ENCODE measurements at regions of chr2 and their contacts with region 1.

Region 1: DNA sequence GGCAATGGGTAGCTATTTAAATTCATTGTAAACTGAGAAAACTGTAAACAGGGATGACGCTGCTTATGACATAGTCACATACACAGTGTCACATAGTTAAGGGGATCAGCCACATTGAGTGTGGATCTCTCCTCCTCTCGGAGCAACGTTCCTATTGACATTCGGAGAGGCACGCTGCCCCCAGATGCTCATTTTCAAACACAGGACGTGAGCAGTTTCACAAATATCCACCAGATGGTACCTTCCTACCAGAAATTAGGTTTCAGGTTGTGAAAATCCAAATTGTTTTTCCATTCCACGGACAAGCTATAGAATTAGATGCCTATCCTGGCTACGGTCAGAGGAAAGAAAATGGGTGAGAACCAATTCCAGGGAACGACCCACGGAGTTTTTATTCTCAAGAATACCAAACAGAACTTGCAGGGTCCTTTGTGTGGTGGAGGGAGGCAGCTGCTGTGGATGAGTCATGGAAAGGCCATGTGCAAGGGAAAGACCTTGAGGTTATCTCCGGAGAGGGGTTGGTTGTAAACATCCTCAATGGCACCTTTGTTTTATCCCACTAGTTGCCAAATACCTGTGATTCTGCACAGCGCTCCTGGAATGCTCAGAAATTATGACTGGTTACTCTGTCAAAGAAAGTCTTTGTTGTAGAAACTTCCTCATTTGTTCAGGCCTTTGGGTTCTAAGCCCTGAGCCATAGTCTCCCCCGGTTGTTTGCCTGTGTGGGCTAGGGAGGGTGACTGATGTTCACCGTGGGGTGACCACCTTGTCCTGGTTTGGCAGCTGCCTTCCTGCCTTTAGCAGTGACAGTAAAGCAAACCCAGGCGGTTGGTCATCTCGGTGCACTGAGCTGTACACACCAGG is 88.0 kb downstream of the ACTR3 start:
- DNase-seq: peak; percentile 12
- ATAC-seq: no peak
- H3K4me3 Mint-ChIP-seq: no peak overlapping the region
- H3K27ac Mint-ChIP-seq: no peak overlapping the region
- H3K4me1 Mint-ChIP-seq: peaks cover 5% of the 10 kb centered on the region
- H3K27me3 Mint-ChIP-seq: no peaks in the 10 kb centered on the region

Region 2: GRCh38 chr2:113602869-113603466 is 374.9 kb before region 1 on chr2:
- CTCF ChIA-PET with region 1: interaction called, 4 read pairs
- POLR2A ChIA-PET with region 1: no interaction called
- intact Hi-C with region 1: loop called in 1 of 2 experiments (anchors 2 kb)
- DNase-seq: peak; percentile 6
- ATAC-seq: peak; percentile 47
- H3K4me3 Mint-ChIP-seq: peak overlapping the region; percentile 82
- H3K27ac Mint-ChIP-seq: peak overlapping the region; percentile 90
- H3K4me1 Mint-ChIP-seq: peaks cover 7% of the 10 kb centered on the region
- H3K27me3 Mint-ChIP-seq: no peaks in the 10 kb centered on the region

Region 3: DNA sequence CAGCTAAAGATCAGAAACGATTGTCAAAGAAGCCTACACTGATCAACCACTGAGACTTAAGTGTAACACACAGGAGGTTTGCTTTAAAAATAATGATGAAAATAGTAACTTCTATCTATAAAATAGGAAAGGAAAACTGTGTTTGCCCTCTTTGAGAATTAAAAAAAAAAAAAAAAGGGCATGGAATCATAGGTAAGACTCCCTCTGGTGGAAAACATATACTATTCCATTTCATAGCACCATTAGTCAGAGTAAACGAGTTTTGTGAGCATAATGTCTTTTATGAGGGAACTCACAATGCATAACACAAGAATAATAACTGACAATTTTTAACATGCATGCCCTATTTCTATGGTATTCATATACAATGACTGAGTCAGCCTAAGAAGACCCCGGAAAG is 257.7 kb before region 1 on chr2:
- CTCF ChIA-PET with region 1: interaction called, 8 read pairs
- POLR2A ChIA-PET with region 1: no interaction called
- intact Hi-C with region 1: loop called in 1 of 2 experiments (anchors 5 kb)
- DNase-seq: no peak
- ATAC-seq: no peak
- H3K4me3 Mint-ChIP-seq: no peak overlapping the region
- H3K27ac Mint-ChIP-seq: no peak overlapping the region
- H3K4me1 Mint-ChIP-seq: no peaks in the 10 kb centered on the region
- H3K27me3 Mint-ChIP-seq: no peaks in the 10 kb centered on the region

Region 4: DNA sequence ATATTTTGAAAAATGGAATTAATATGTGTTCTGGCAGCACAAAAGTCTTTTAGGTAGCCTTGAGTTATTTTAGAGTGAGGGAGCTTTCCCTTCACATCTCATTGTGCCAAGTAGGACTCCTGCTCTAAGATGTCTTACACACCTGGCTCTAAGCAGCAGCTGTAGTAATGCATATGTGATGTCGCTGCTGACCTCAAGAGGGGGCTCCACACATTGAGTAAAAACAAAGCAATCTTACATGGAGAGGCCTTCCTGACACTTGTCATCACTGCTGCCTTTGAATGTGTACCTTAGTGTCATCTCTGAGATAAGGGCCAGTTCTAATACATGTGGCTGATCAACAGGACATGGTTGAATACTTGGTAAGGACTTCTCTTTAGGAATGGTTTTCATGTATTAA is 12.2 kb before region 1 on chr2:
- CTCF ChIA-PET with region 1: interaction called, 27 read pairs
- POLR2A ChIA-PET with region 1: no interaction called
- intact Hi-C with region 1: no loop called
- DNase-seq: peak; percentile 53
- ATAC-seq: peak; percentile 83
- H3K4me3 Mint-ChIP-seq: no peak overlapping the region
- H3K27ac Mint-ChIP-seq: no peak overlapping the region
- H3K4me1 Mint-ChIP-seq: peaks cover 19% of the 10 kb centered on the region
- H3K27me3 Mint-ChIP-seq: no peaks in the 10 kb centered on the region

Measured in activated CD4-positive, alpha-beta T cell treated with anti-CD3 and anti-CD28 coated beads for 36 hours (primary cell).